HepG2 (cell line): ENCODE measurements at regions of chr1 and their contacts with region 1.

Region 1: GRCh38 chr1:36187800-36188593 is 32.0 kb downstream of the MAP7D1 start:
- DNase-seq: peak; percentile 87
- ATAC-seq: peak; percentile 96
- H3K4me3 ChIP-seq: peak overlapping the region; percentile 22 to 72 (median 44); a peak in 5 of 6 replicates
- H3K27ac ChIP-seq: peak overlapping the region; percentile 41
- H3K4me1 ChIP-seq: peaks cover 10% of the 10 kb centered on the region; the same call in 1 of the 2 replicates
- H3K27me3 ChIP-seq: no peaks in the 10 kb centered on the region
- CTCF ChIP-seq: peak; percentile 98
- EP300 ChIP-seq: no peak
- POLR2A ChIP-seq: peak in 1 of 2 experiments; percentile 46; a peak in 2 of 4 replicates
- RAD21 ChIP-seq: peak; percentile 96

Region 2: DNA sequence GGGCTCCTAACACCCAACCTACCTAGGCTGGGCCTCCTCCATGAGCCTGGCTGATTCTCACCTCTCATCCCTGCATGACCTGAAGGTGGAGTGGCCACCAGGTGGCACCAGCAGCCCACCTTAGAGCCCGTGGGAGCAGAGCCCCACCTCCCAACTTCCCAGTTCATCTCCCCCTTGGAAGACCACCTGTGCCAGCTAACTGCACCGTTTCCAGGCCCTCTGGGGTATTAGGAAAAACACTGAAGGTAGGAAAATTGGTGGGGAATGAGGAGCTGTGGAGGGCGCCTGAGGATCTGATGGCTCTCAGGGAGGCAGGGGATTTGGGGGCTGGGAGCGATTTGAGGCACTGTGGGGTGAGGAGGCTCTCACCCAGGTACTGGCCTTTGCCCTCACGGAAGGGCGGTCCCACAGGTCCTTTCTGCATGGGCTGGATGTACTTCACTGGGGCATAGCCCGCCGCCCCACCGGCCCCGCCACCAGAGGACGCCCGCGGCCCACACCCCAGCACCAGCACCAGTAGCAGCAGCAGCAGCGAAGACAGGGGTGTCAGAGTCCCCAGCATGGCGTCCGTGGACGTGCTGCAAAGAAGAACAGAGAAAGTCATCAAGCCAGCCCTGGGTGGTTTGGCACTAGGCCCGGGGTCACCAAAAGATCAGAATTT is 88.2 kb before region 1 on chr1:
- CTCF ChIA-PET with region 1: interaction called, 34 read pairs
- POLR2A ChIA-PET with region 1: no interaction called
- in situ Hi-C with region 1: no loop called
- intact Hi-C with region 1: loop called (anchors 1 kb)
- DNase-seq: peak; percentile 73
- ATAC-seq: peak; percentile 86
- H3K4me3 ChIP-seq: peak overlapping the region in 2 of 3 experiments; percentile 42 to 60; a peak in 3 of 6 replicates
- H3K27ac ChIP-seq: no peak overlapping the region
- H3K4me1 ChIP-seq: peaks cover 29% of the 10 kb centered on the region; the same call in 1 of the 2 replicates
- H3K27me3 ChIP-seq: no peaks in the 10 kb centered on the region
- CTCF ChIP-seq: peak; percentile 86
- EP300 ChIP-seq: no peak
- POLR2A ChIP-seq: no peak
- RAD21 ChIP-seq: peak; percentile 93

Region 3: GRCh38 chr1:36149237-36149972 is 38.6 kb before region 1 on chr1 and contains the start of gene TRAPPC3:
- CTCF ChIA-PET with region 1: interaction called, 43 read pairs
- POLR2A ChIA-PET with region 1: interaction called, 34 read pairs
- in situ Hi-C with region 1: loop called (anchors 5 kb)
- intact Hi-C with region 1: loop called (anchors 1 kb)
- DNase-seq: peak; percentile 99
- ATAC-seq: peak; percentile 88
- H3K4me3 ChIP-seq: peak within 1 kb of the TSS; percentile 76 to 83 (median 81)
- H3K27ac ChIP-seq: peak within 1 kb of the TSS; percentile 80
- H3K4me1 ChIP-seq: peaks cover 58% of the 10 kb centered on the region
- H3K27me3 ChIP-seq: no peaks in the 10 kb centered on the region
- CTCF ChIP-seq: peak; percentile 98
- EP300 ChIP-seq: no peak
- POLR2A ChIP-seq: peak in 1 of 2 experiments; percentile 72; a peak in 2 of 4 replicates
- RAD21 ChIP-seq: peak; percentile 99
- total RNA-seq, gene TRAPPC3: 62.4 and 66.7 TPM in 2 replicates

Region 4: GRCh38 chr1:36155408-36156328 is 32.3 kb before region 1 on chr1 and contains the start of gene MAP7D1:
- CTCF ChIA-PET with region 1: interaction called, 43 read pairs
- POLR2A ChIA-PET with region 1: interaction called, 34 read pairs
- in situ Hi-C with region 1: loop called (anchors 5 kb)
- intact Hi-C with region 1: loop called (anchors 1 kb)
- DNase-seq: peak; percentile 57
- ATAC-seq: peak; percentile 66
- H3K4me3 ChIP-seq: peak within 1 kb of the TSS; percentile 74 to 89 (median 85)
- H3K27ac ChIP-seq: peak within 1 kb of the TSS; percentile 67
- H3K4me1 ChIP-seq: peaks cover 61% of the 10 kb centered on the region
- H3K27me3 ChIP-seq: no peaks in the 10 kb centered on the region
- CTCF ChIP-seq: no peak
- EP300 ChIP-seq: no peak
- POLR2A ChIP-seq: peak in 1 of 2 experiments; percentile 81; a peak in 2 of 4 replicates
- RAD21 ChIP-seq: peak; percentile 28; the same call in 1 of the 2 replicates
- total RNA-seq, gene MAP7D1: 5.5 and 7.2 TPM in 2 replicates

Region 5: DNA sequence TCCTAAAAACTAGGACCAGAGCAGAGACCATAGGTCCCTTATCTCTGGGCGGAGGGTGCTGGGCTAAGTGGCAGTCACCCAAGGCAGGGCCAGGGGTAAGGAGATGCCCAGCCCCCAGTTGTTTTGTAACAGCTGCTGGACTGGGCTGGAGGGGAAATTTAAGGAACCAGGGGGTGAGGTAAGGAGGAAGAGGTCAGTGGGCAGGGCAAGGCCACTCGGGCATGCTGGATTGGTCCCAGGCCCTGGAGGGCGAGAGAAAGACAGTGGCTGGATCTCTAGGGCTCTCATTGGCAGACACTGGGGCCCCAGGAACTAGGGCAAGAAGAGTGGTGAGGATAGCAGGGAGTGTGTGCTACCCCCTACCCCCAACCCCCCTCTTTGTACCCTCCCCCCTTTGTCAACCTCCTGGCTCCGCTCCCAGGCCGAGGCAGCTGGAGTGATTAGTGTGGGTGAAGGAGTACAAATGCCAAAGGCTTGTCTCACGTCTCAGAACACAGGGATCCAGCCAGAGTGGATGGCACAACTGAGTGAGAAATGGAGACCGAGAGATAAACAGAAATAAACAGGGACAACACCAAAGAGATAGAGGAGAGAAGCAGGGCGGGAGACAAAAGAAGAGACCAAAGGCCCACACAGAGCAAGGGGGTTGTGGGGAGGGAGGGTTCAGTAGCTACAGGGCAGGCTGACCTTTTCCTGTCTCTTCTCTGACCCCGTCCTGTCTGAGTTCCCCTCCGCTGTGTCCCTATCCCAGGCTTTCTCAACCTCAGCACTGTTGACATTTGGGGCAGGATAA is 15.8 kb after region 1 on chr1:
- CTCF ChIA-PET with region 1: no interaction called
- POLR2A ChIA-PET with region 1: no interaction called
- in situ Hi-C with region 1: no loop called
- intact Hi-C with region 1: no loop called
- DNase-seq: no peak
- ATAC-seq: peak; percentile 75
- H3K4me3 ChIP-seq: peak overlapping the region; percentile 33 to 63 (median 41)
- H3K27ac ChIP-seq: no peak overlapping the region
- H3K4me1 ChIP-seq: peaks cover 47% of the 10 kb centered on the region
- H3K27me3 ChIP-seq: no peaks in the 10 kb centered on the region
- CTCF ChIP-seq: no peak
- EP300 ChIP-seq: no peak
- POLR2A ChIP-seq: no peak
- RAD21 ChIP-seq: no peak